ENCODE measurements at regions of chr3 and their contacts with region 1.

Region 1: GRCh38 chr3:39288300-39288808 is 8.5 kb upstream of the CX3CR1 start:
- DNase-seq: peak; percentile 78
- ATAC-seq: peak; percentile 96
- H3K4me3 ChIP-seq: no peak overlapping the region
- H3K27ac ChIP-seq: no peak overlapping the region
- H3K4me1 ChIP-seq: peaks cover 0 to 7% of the 10 kb centered on the region in 2 experiments; a peak in 1 of 4 replicates
- H3K27me3 ChIP-seq: no peaks in the 10 kb centered on the region
- CTCF ChIP-seq: peak; percentile 94 to 99 (median 96)
- POLR2A ChIP-seq: no peak
- RAD21 ChIP-seq: peak; percentile 100

Region 2: DNA sequence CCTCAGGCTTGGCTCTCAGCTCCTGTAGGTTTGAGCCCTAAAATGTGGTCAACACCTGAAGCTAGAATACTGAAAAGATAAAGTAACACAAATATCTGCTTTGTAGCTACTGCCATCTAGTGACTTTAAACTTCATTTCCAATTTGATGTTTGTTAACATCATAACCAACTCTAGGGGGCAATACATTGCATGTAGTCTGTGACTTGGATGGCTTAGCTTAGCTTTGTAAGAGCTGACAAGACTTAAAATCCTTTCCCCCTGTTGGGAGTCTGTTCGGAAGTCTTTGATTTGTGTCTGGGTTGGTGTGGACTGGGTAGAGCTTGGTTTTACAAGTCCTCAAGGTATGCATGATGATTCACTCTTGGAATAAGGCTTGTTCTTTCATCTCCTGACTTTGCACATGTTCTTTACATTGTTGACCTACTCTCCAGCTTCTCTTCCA is 288.3 kb before region 1 on chr3:
- CTCF ChIA-PET with region 1: interaction called, 17 read pairs
- POLR2A ChIA-PET with region 1: no interaction called
- RAD21 ChIA-PET with region 1: interaction called in 1 of 2 experiments, 7 read pairs
- intact Hi-C with region 1: no loop called
- DNase-seq: peak; percentile 80
- ATAC-seq: peak; percentile 94
- H3K4me3 ChIP-seq: no peak overlapping the region
- H3K27ac ChIP-seq: no peak overlapping the region
- H3K4me1 ChIP-seq: no peaks in the 10 kb centered on the region
- H3K27me3 ChIP-seq: 0 out of 2 replicates have a peak, but pooled peaks cover 4% of the 10 kb centered on the region
- CTCF ChIP-seq: peak; percentile 83 to 99 (median 95)
- POLR2A ChIP-seq: no peak
- RAD21 ChIP-seq: peak; percentile 88

Region 3: GRCh38 chr3:39051647-39052561 is 236.4 kb before region 1 on chr3 and contains the starts of genes SCN11A and WDR48:
- CTCF ChIA-PET with region 1: interaction called, 4 read pairs
- POLR2A ChIA-PET with region 1: no interaction called
- RAD21 ChIA-PET with region 1: no interaction called
- intact Hi-C with region 1: loop called (anchors 5 kb)
- DNase-seq: peak; percentile 76
- ATAC-seq: peak; percentile 99
- H3K4me3 ChIP-seq: peak within 1 kb of the TSS; percentile 80 to 83
- H3K27ac ChIP-seq: peak within 1 kb of the TSS; percentile 21; the same call in 1 of the 2 replicates
- H3K4me1 ChIP-seq: peaks cover 4 to 9% of the 10 kb centered on the region in 2 experiments; a peak in 2 of 4 replicates
- H3K27me3 ChIP-seq: no peaks in the 10 kb centered on the region
- CTCF ChIP-seq: no peak
- POLR2A ChIP-seq: peak; percentile 84
- RAD21 ChIP-seq: no peak
- total RNA-seq, gene SCN11A: 0.05 TPM
- total RNA-seq, gene WDR48: 35.6 TPM

Region 4: GRCh38 chr3:39107388-39108199 is 180.8 kb before region 1 on chr3 and contains the starts of genes GORASP1 and TTC21A:
- CTCF ChIA-PET with region 1: interaction called, 12 read pairs
- POLR2A ChIA-PET with region 1: no interaction called
- RAD21 ChIA-PET with region 1: interaction called, 4 to 5 read pairs
- intact Hi-C with region 1: no loop called
- DNase-seq: peak; percentile 65
- ATAC-seq: peak; percentile 84
- H3K4me3 ChIP-seq: peak within 1 kb of the TSS; percentile 87 to 96
- H3K27ac ChIP-seq: peak within 1 kb of the TSS; percentile 79
- H3K4me1 ChIP-seq: peaks cover 16 to 23% of the 10 kb centered on the region in 2 experiments
- H3K27me3 ChIP-seq: no peaks in the 10 kb centered on the region
- CTCF ChIP-seq: no peak
- POLR2A ChIP-seq: peak; percentile 15
- RAD21 ChIP-seq: no peak
- total RNA-seq, gene GORASP1: 38.8 TPM
- total RNA-seq, gene TTC21A: 5.6 TPM

Region 5: GRCh38 chr3:39189959-39190269 is 98.4 kb before region 1 on chr3:
- CTCF ChIA-PET with region 1: interaction called, 112 read pairs
- POLR2A ChIA-PET with region 1: interaction called, 3 read pairs
- RAD21 ChIA-PET with region 1: interaction called, 21 to 23 read pairs
- intact Hi-C with region 1: loop called (anchors 1 kb)
- DNase-seq: peak; percentile 53
- ATAC-seq: peak; percentile 82
- H3K4me3 ChIP-seq: no peak overlapping the region
- H3K27ac ChIP-seq: no peak overlapping the region
- H3K4me1 ChIP-seq: peaks cover 0 to 21% of the 10 kb centered on the region in 2 experiments; a peak in 1 of 4 replicates
- H3K27me3 ChIP-seq: no peaks in the 10 kb centered on the region
- CTCF ChIP-seq: peak; percentile 72 to 84 (median 72); a peak in 5 of 6 replicates
- POLR2A ChIP-seq: no peak
- RAD21 ChIP-seq: peak; percentile 87

Region 6: GRCh38 chr3:39208463-39209055 is 79.8 kb before region 1 on chr3:
- CTCF ChIA-PET with region 1: interaction called, 5 read pairs
- POLR2A ChIA-PET with region 1: no interaction called
- RAD21 ChIA-PET with region 1: interaction called in 1 of 2 experiments, 3 read pairs
- intact Hi-C with region 1: loop called (anchors 1 kb)
- DNase-seq: peak; percentile 54
- ATAC-seq: peak; percentile 99
- H3K4me3 ChIP-seq: no peak overlapping the region
- H3K27ac ChIP-seq: no peak overlapping the region
- H3K4me1 ChIP-seq: peaks cover 0 to 3% of the 10 kb centered on the region in 2 experiments; a peak in 1 of 4 replicates
- H3K27me3 ChIP-seq: peaks cover 11% of the 10 kb centered on the region; the same call in 1 of the 2 replicates
- CTCF ChIP-seq: peak; percentile 56 to 75 (median 67); a peak in 5 of 6 replicates
- POLR2A ChIP-seq: no peak
- RAD21 ChIP-seq: peak; percentile 55

Region 7: DNA sequence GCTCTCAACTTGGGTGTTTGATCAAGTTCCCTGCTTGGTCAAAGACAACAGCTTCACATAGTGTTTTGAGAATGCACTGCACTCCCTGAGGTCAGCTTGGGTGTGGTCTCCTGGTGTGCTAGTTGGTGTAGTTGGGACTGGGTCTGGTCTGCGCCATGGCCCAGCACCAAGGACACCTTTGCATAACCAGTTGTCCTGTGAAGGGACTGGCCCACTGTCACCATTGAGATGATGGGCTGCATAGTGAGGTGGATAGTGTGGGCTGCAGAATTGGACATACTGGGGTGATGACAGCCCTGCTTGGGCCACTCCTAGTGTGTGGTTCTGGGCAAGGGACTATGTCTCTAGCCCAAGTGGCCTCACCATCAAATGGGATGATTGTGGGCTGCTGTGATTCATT is 127.6 kb after region 1 on chr3:
- CTCF ChIA-PET with region 1: no interaction called
- POLR2A ChIA-PET with region 1: no interaction called
- RAD21 ChIA-PET with region 1: no interaction called
- intact Hi-C with region 1: no loop called
- DNase-seq: no peak
- ATAC-seq: peak; percentile 26
- H3K4me3 ChIP-seq: no peak overlapping the region
- H3K27ac ChIP-seq: no peak overlapping the region
- H3K4me1 ChIP-seq: peaks cover 0 to 22% of the 10 kb centered on the region in 2 experiments; a peak in 2 of 4 replicates
- H3K27me3 ChIP-seq: no peaks in the 10 kb centered on the region
- CTCF ChIP-seq: no peak
- POLR2A ChIP-seq: no peak
- RAD21 ChIP-seq: no peak